GM13976 (cell line): ENCODE measurements at regions of chr1 and their contacts with region 1.

Region 1: DNA sequence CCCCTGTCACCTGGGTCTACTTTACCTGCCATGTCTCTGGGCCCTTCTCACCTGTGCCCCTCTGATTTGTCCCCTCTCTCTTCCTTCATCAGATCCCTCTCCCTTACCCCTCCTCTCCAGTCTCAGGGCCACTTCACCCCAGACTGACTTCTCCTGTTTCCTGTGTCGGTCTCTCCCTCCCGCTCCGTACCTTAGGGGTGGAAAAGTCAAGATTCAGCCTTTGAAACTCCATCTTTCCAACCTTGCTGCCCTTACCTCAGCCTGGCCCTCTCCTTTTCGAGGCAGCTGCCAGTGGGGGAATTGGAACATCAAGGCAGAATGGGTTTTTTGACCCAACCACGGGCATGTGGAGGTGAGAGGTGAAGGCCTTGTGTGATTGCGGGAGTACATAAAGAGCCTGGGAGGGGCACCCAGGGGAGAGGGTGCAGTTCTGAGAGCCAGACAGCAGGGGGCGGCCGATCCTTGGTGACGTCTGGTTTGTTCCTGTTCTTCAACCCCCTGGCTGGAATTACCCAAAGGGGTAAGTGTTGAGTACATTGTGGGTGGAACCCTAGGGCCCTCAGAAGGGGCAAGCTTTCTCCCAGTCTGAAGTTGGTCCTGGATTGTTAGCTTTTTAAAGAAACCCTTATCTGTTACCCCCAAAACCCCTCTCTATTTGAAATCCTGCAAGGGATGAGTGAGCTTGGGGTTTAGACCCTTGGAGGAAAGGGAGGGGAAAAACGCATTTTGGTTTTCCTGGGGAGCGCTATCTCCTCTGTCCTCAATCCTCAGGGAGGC is 12.3 kb upstream of the DMBX1 start:
- DNase-seq: peak; percentile 90
- CTCF ChIP-seq: peak; percentile 78

Region 2: DNA sequence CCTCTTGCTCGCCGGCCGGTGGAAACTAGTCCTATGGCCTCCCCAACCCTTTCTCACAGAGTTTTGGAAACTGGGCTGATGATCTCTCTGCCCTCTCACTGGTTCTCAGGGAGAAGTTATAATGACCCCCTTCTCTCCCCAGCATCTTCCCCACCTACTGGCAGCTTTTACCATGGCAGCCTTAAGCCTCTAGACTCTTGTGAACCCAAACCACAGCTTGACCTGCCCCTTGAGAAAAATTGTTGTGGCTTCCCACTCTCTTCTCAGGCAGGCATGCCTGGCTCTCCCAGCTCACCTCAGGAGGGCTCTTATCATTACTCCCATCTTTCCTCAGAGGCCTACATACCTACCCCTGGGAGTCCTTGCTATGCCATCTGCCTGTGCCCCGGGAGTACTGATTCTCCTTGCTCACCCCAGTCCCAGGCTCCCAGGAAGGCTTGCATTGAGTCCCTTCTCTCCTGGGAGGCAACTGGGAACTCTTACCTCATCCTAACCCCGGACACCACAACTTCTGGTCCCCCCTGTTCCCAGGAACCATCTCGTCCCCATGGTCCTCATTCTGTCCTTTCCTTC is 135.2 kb before region 1 on chr1:
- in situ Hi-C with region 1: no loop called
- DNase-seq: peak; percentile 65
- CTCF ChIP-seq: no peak

Region 3: GRCh38 chr1:46527474-46528296 is 50.3 kb after region 1 on chr1:
- in situ Hi-C with region 1: loop called (anchors 5 kb)
- DNase-seq: peak; percentile 90
- CTCF ChIP-seq: peak; percentile 90